Colonic mucosa (tissue), 4 donors: ENCODE measurements at regions of chr12 and their contacts with region 1.

Region 1: GRCh38 chr12:77685112-77685511 is 145.6 kb upstream of the NAV3 start:
- DNase-seq: peak; percentile 50
- H3K4me3 ChIP-seq: no peak overlapping the region
- H3K27ac ChIP-seq: no peak overlapping the region
- H3K4me1 ChIP-seq: no peaks in the 10 kb centered on the region
- H3K27me3 ChIP-seq: no peaks in the 10 kb centered on the region
- CTCF ChIP-seq: peak; percentile 42

Region 2: DNA sequence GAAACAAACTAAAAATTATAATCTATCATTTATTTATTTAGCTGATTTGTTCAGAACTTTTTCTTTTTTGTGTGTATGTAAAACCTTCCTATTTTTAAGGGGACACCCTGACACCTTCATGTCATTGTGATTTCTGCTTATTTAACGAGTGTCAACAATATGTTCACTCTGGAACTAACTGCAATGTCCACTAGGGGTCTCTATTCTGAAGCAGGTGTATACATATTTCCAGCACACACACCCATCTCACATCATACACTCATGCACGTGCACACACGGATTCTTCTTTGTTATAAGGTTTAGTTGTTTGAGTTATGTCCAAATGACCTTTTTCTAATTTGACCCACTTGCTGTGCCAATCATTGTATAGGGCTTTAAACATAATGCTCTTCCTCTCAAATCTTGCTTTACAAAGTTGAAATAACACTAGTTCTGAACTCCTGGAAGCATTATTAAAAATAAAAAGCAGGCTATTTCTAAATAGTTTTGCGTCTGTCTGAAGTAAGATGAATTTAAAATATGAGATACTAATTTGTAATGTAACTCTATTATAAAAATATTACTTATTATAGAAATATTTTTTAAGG is 635.3 kb before region 1 on chr12:
- intact Hi-C with region 1: loop called (anchors 2 kb)
- DNase-seq: peak; percentile 23
- H3K4me3 ChIP-seq: no peak overlapping the region
- H3K27ac ChIP-seq: no peak overlapping the region
- H3K4me1 ChIP-seq: no peaks in the 10 kb centered on the region
- H3K27me3 ChIP-seq: no peaks in the 10 kb centered on the region
- CTCF ChIP-seq: peak; percentile 75

Region 3: DNA sequence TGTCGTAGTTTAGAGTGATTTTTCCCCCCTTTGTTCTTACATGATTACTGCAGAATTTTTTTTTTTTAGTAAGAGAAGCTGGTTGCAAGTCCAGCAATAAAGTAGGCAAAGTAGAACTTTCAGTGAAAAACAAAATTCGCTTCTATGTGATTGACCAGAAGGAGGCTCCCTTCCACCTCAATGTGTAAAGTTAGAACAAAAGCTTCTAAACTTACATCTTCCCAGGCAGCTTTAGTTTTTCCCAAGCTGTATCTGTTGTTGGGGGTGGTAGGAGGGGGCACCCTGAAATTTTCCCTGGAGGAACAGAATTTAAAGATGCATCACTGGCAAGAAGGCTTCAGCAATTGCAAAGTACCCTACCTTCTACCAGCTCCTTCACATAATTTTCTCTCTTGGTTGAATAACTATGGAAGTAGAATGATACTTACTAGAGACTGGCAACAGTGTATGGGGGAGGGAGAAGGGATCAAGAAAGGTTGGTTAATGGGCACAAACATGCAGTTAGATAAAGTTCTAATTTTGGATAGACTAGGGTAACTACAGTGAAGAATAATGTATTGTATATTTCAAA is 532.4 kb before region 1 on chr12:
- intact Hi-C with region 1: loop called (anchors 2 kb)
- DNase-seq: no peak
- H3K4me3 ChIP-seq: no peak overlapping the region
- H3K27ac ChIP-seq: no peak overlapping the region
- H3K4me1 ChIP-seq: no peaks in the 10 kb centered on the region
- H3K27me3 ChIP-seq: no peaks in the 10 kb centered on the region
- CTCF ChIP-seq: peak; percentile 26